Calu3 (cell line): ENCODE measurements at regions of chr12 and their contacts with region 1.

Region 1: GRCh38 chr12:106113824-106114446 is 24.8 kb downstream of the NUAK1 start:
- DNase-seq: no peak
- H3K4me3 Mint-ChIP-seq: no peak overlapping the region
- H3K27ac Mint-ChIP-seq: no peak overlapping the region
- H3K4me1 Mint-ChIP-seq: peaks cover 10% of the 10 kb centered on the region
- H3K27me3 Mint-ChIP-seq: no peaks in the 10 kb centered on the region
- CTCF ChIP-seq: no peak

Region 2: DNA sequence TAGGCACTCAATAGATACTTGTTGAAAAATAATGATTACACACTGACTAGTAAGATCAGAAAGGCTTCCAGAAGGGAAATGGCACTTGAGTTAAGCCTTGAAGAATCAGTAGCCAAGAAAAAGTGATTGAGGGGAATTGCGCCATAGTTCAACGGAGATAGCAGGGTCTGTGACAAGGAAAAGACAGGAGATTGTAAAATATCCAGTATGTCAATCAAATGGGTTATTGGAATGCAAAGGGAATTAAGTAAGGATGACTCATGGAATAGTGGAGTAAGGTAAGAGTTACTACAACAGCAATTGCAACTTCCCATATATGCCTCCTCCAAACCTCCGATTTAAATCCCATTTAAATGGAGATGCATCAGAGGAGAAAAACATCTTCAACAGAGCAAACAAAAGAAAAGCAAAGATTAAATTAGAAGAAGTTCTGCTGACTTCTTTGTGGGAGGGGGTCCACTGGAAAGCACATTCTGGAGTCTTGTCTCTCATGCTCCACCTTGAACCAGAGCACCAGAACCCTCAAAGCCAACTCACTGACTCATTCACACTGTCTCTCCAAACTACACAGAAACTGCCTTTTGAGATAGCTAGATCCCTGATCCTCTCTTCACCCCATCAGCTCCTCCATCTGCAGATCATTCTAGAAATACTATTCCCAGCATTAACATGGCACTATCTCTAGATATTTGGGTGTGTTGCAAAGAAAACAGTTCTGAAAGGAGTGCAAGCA is 113.4 kb before region 1 on chr12:
- CTCF ChIA-PET with region 1: no interaction called
- intact Hi-C with region 1: no loop called
- DNase-seq: no peak
- H3K4me3 Mint-ChIP-seq: no peak overlapping the region
- H3K27ac Mint-ChIP-seq: no peak overlapping the region
- H3K4me1 Mint-ChIP-seq: peaks cover 10% of the 10 kb centered on the region
- H3K27me3 Mint-ChIP-seq: peaks cover 55% of the 10 kb centered on the region
- CTCF ChIP-seq: no peak

Region 3: DNA sequence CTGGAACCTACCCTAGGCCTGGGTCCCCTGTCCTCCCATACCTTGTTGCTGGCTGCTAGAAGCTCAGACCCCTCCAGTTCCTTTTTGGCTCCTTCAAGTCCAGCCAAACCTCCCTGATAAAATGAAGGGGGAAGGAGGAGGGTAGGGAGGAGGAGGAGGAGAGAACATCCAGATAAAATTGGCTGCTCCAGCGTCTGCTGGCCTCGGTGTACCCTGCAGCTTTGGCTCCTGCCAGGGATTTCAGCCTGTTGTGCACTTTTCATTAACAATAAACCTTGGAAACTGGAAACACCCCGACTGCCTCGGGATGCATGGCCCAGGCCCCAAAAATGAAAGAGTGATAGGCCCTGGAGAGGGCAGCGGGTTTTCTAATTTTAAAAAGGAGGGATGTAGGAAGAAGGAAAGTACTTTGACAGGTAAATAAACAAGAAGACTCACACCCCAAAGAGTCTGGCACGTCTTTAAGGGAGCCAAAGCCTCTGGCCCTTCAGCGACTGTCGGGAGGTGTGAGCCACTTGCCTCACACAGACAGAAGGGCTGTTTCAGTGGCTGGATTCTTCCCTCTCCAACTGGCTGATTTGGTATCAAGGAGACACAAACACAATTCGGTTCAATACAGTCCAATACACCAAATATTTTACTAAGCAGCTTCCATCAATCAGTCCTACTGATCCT is 25.0 kb before region 1 on chr12:
- CTCF ChIA-PET with region 1: interaction called, 3 read pairs
- intact Hi-C with region 1: loop called (anchors 1 kb)
- DNase-seq: no peak
- H3K4me3 Mint-ChIP-seq: no peak overlapping the region
- H3K27ac Mint-ChIP-seq: no peak overlapping the region
- H3K4me1 Mint-ChIP-seq: peaks cover 11% of the 10 kb centered on the region
- H3K27me3 Mint-ChIP-seq: no peaks in the 10 kb centered on the region
- CTCF ChIP-seq: no peak